MCF 10A (cell line): ENCODE measurements at regions of chr13 and their contacts with region 1.

Region 1: GRCh38 chr13:51286135-51287002 is 53.1 kb upstream of the SERPINE3 start:
- DNase-seq: peak; percentile 76
- H3K4me3 Mint-ChIP-seq: no peak overlapping the region
- H3K27ac Mint-ChIP-seq: no peak overlapping the region
- H3K4me1 Mint-ChIP-seq: no peaks in the 10 kb centered on the region
- H3K27me3 Mint-ChIP-seq: no peaks in the 10 kb centered on the region
- CTCF ChIP-seq: peak; percentile 85

Region 2: GRCh38 chr13:50448535-50448998 is 837.8 kb before region 1 on chr13:
- CTCF ChIA-PET with region 1: no interaction called
- POLR2A ChIA-PET with region 1: no interaction called
- intact Hi-C with region 1: no loop called
- DNase-seq: no peak
- H3K4me3 Mint-ChIP-seq: no peak overlapping the region
- H3K27ac Mint-ChIP-seq: no peak overlapping the region
- H3K4me1 Mint-ChIP-seq: no peaks in the 10 kb centered on the region
- H3K27me3 Mint-ChIP-seq: no peaks in the 10 kb centered on the region
- CTCF ChIP-seq: no peak

Region 3: DNA sequence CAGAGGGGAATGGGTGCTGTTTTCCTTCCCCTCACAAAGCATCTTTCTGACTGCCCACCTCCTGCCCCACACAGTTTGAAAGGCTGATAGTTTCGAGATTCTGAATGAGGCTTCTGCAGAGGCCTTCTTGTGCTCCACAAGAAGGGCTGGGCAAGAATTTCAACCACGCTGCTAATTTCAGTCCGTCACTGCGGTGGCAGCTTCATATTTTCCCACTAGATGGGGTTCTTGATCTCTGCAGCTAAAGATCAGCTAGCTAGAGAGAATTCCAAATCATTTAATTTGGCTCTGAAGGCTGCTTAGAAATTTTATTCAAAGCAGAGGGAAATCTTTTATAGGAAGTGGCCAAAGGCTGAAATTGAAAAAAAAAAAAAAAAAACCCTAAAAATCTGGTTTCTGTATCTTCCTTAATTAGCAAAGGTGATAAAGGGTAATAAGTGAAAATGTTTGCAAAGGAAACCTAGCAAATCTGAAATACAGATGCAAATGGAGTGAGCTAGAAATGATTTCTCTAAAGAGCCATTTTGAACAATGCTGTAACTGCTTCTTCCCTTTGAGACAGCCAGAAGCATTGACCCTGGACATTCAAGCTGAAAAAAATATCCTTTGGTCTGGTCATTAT is 137.3 kb before region 1 on chr13:
- CTCF ChIA-PET with region 1: interaction called, 195 read pairs
- POLR2A ChIA-PET with region 1: interaction called, 7 read pairs
- intact Hi-C with region 1: loop called (anchors 1 kb)
- DNase-seq: peak; percentile 38
- H3K4me3 Mint-ChIP-seq: no peak overlapping the region
- H3K27ac Mint-ChIP-seq: no peak overlapping the region
- H3K4me1 Mint-ChIP-seq: no peaks in the 10 kb centered on the region
- H3K27me3 Mint-ChIP-seq: peaks cover 96% of the 10 kb centered on the region
- CTCF ChIP-seq: peak; percentile 53

Region 4: DNA sequence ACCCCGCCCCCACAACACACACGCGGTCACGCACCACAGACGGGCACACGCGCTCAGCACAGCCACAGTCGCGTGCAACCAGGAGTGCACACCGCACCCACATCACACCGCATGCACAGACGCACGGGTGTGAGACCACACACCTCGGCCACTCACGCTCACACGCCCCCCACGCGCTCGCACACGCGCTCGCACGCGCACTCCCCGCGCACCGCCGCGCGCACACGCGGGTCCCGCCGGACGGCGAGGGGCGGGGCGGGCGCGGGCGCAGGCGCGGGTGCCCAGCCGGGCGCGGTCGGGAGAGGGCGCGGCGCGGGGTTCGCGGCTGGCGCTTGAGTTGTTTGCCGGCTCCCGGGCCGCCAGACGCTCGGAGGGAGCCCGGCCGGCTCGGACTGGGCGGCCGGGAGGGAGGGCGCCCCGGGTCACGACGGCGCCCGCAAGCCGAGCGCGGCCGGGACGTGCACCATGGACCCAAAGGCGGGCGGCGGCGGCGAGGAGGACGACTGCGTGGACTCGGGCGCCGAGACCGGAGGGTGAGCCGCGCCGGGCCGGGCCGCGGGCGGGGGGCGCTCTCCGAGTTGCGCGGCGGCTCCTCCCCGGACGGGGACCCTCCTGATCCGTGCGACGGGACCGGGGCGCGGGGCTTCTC is 64.2 kb before region 1 on chr13 and contains the start of gene FAM124A:
- CTCF ChIA-PET with region 1: interaction called, 40 read pairs
- POLR2A ChIA-PET with region 1: no interaction called
- intact Hi-C with region 1: loop called (anchors 1 kb)
- DNase-seq: peak; percentile 53
- H3K4me3 Mint-ChIP-seq: peak within 1 kb of the TSS; percentile 62
- H3K27ac Mint-ChIP-seq: no peak within 1 kb of the TSS
- H3K4me1 Mint-ChIP-seq: peaks cover 6% of the 10 kb centered on the region
- H3K27me3 Mint-ChIP-seq: peaks cover 20% of the 10 kb centered on the region
- CTCF ChIP-seq: peak; percentile 15
- total RNA-seq, gene FAM124A: 0.12 and 0.15 TPM in 2 replicates

Region 5: GRCh38 chr13:51271528-51272085 is 14.8 kb before region 1 on chr13:
- CTCF ChIA-PET with region 1: interaction called, 22 read pairs
- POLR2A ChIA-PET with region 1: no interaction called
- intact Hi-C with region 1: no loop called
- DNase-seq: no peak
- H3K4me3 Mint-ChIP-seq: no peak overlapping the region
- H3K27ac Mint-ChIP-seq: no peak overlapping the region
- H3K4me1 Mint-ChIP-seq: peaks cover 3% of the 10 kb centered on the region
- H3K27me3 Mint-ChIP-seq: no peaks in the 10 kb centered on the region
- CTCF ChIP-seq: no peak

Region 6: DNA sequence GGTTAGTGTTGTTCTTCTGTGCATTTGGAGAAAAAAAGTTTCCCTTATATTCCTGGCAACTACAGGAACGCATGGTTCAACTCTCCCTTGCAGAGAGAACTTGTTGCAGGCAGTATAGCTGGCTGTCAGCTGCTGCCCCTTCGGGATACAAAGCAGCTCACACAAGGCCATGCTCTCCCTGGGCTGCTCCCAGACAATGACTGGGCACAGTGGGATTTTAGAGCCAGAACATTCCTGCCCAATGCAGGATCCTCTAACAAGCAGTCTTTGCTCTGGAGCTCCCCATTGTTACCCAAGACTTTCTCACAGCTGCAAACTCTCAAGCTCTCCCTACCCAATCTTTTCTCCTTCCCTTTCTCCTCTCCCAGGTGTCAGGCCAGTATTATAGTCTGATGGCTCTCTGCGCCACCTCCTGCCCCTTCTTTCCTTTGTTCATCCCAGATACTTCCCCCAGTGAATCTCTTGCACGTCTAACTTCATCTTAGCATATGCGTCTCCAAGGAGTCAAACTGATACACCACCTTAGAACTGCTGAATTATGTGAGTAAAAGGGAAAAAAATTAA is 25.7 kb after region 1 on chr13:
- CTCF ChIA-PET with region 1: interaction called, 10 read pairs
- POLR2A ChIA-PET with region 1: no interaction called
- intact Hi-C with region 1: no loop called
- DNase-seq: no peak
- H3K4me3 Mint-ChIP-seq: no peak overlapping the region
- H3K27ac Mint-ChIP-seq: no peak overlapping the region
- H3K4me1 Mint-ChIP-seq: no peaks in the 10 kb centered on the region
- H3K27me3 Mint-ChIP-seq: peaks cover 12% of the 10 kb centered on the region
- CTCF ChIP-seq: no peak

Region 7: GRCh38 chr13:51583875-51584730 is 297.7 kb after region 1 on chr13 and contains the start of gene WDFY2:
- CTCF ChIA-PET with region 1: no interaction called
- POLR2A ChIA-PET with region 1: no interaction called
- intact Hi-C with region 1: no loop called
- DNase-seq: peak; percentile 100
- H3K4me3 Mint-ChIP-seq: peak within 1 kb of the TSS; percentile 88
- H3K27ac Mint-ChIP-seq: peak within 1 kb of the TSS; percentile 85
- H3K4me1 Mint-ChIP-seq: peaks cover 41% of the 10 kb centered on the region
- H3K27me3 Mint-ChIP-seq: no peaks in the 10 kb centered on the region
- CTCF ChIP-seq: no peak
- total RNA-seq, gene WDFY2: 46.7 and 56.2 TPM in 2 replicates

Region 8: DNA sequence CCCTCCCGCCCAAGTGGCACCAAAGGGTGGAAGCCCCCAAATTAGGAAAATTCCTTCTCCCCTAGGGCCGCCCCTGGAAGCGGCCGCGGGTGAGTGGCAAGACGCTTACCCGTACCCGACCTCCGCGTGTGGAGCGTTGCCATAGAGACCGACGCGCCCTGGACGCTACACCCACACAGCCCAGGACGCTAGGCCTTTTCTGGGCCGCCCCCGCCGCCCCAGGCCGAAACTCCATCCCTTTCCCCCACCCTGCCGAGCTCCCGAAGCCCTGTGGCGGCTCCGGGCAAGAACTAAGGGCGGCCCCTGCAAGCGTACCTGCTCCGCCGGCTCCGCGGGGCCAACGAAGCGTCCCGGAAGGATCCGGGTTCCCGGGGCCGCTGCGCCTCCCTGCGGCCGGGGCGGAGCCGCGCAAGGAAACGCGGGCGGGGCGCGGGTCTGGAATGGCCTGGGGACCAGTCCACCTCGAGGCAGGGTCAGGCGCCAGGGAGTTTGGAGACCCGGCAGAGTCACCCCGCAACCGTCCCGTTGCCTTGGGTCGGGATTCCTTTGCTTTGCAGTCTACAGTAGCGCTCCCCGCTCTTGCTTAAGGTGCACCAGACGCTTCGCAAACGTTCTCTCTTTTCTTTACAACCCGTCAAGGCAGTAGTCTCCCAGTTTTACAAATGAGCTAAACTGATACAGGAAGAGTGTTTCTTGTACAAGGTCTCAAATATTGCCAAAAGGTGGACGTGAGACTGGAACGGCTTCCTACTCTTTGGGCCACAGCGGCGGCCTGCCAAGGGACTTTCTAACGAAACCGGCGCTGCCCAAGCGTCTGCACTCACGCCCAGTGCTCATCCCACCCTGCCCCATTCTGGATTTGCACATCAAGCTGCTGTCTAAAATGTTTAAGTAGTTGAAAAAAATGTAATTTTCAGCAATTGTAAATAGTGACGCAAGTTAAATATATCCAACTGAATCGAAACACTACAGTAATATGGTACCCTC is 842.6 kb after region 1 on chr13 and contains the start of gene NEK5:
- CTCF ChIA-PET with region 1: no interaction called
- POLR2A ChIA-PET with region 1: no interaction called
- intact Hi-C with region 1: loop called (anchors 5 kb)
- DNase-seq: peak; percentile 56
- H3K4me3 Mint-ChIP-seq: peak within 1 kb of the TSS; percentile 78
- H3K27ac Mint-ChIP-seq: no peak within 1 kb of the TSS
- H3K4me1 Mint-ChIP-seq: peaks cover 5% of the 10 kb centered on the region
- H3K27me3 Mint-ChIP-seq: no peaks in the 10 kb centered on the region
- CTCF ChIP-seq: peak; percentile 79
- total RNA-seq, gene NEK5: 0.21 and 0.61 TPM in 2 replicates